ENCODE measurements at regions of chr11 and their contacts with region 1.

Region 1: DNA sequence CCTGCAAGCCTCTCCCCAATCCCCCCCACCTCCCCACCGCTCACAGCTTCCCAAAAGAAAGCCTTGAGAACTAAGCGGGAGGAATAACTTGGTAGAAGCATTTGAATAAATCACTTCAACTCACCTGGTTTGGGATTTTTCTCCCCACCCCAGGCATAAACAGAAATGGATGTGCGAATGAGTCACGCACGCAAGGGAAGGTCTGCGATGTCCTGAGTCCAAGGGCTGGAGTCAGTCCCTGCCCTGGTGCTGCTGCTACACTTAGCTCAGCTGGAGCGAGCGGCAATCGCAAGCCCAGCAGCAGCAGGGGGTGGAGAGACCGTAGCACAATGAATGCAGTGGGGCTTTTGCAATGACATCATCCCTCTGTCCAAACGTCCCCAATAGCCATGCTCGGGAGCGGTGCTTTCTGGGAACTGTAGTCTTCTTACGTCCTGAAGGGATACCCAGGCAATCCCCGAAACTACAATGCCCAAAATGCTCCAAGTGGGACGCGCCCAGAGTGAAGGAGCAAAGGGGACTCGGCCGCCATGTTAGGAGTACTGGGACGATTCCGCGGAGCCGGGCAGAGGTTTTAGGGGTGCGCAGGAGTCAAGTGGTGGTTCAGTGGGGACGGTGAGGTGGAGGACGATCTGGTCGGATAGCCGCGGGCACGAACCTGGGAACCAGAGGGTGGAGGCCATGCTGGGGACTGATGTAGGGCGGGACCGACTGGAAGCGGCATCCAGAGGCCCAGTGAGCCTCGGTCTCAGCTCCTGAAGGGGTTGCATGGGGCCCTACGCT is at the start of gene RAB30:
- DNase-seq: peak; percentile 97
- ATAC-seq: peak; percentile 98
- total RNA-seq, gene RAB30: 17.0 to 24.2 TPM

Region 2: GRCh38 chr11:82978422-82979099 is 93.2 kb before region 1 on chr11:
- intact Hi-C with region 1: loop called in 1 of 2 experiments (anchors 5 kb)
- DNase-seq: no peak
- ATAC-seq: no peak

Region 3: GRCh38 chr11:82989628-82990404 is 81.9 kb before region 1 on chr11:
- intact Hi-C with region 1: loop called in 1 of 2 experiments (anchors 5 kb)
- DNase-seq: no peak
- ATAC-seq: no peak

Region 4: GRCh38 chr11:83156150-83156995 is 84.6 kb after region 1 on chr11:
- intact Hi-C with region 1: loop called in 1 of 2 experiments (anchors 5 kb)
- DNase-seq: peak; percentile 99
- ATAC-seq: peak; percentile 95 to 97